Cardiac septum (tissue), 1 donor: ENCODE measurements at regions of chr16 and their contacts with region 1.

Region 1: GRCh38 chr16:82580298-82580890 is 46.4 kb upstream of the CDH13 start:
- DNase-seq: no peak

Region 2: DNA sequence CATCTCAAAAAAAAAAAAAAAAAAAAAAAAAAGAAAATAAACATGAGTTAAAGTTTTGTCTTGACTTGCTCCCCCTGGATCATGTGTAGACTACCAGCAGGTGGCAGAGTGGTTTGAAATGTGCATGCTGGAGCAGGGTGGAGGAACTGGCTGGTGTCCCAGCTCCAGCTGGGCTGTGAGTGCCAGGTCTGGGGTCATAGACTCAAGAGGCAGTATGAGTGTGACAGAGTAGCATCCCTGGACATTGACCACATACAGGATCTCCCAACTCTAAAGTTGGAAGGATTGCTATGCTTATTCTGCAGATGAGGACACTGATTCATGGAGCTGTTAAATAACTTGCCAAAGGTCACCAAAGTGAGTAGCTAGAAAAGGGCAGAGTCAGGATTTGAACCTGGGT is 212.4 kb before region 1 on chr16:
- intact Hi-C with region 1: loop called (anchors 5 kb)
- DNase-seq: no peak

Region 3: GRCh38 chr16:82535262-82535661 is 45.1 kb before region 1 on chr16:
- intact Hi-C with region 1: no loop called
- DNase-seq: no peak